ENCODE measurements at regions of chr20 and their contacts with region 1.

Region 1: DNA sequence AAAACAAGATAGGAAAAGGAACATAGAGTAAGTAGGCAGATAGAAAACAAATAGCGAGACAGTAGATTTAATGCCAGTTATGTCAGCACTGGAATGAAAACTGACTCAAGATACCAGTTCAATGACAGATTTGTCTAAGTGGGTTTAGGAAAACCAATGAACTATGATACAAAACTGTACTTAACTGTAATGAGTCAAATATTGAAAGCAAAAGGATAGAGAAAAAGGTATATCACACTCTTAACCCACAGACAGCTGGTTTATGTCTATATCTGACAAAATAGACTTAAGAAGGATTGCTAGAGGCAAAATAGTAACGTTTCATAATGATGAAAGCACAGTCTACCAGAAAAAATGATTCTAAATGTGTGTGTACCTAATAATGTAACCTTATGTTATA is 38.2 kb downstream of the ATRN start:
- DNase-seq: no peak
- H3K4me3 Mint-ChIP-seq: no peak overlapping the region
- H3K27ac Mint-ChIP-seq: no peak overlapping the region
- H3K4me1 Mint-ChIP-seq: peaks cover 11% of the 10 kb centered on the region
- H3K27me3 Mint-ChIP-seq: no peaks in the 10 kb centered on the region

Region 2: DNA sequence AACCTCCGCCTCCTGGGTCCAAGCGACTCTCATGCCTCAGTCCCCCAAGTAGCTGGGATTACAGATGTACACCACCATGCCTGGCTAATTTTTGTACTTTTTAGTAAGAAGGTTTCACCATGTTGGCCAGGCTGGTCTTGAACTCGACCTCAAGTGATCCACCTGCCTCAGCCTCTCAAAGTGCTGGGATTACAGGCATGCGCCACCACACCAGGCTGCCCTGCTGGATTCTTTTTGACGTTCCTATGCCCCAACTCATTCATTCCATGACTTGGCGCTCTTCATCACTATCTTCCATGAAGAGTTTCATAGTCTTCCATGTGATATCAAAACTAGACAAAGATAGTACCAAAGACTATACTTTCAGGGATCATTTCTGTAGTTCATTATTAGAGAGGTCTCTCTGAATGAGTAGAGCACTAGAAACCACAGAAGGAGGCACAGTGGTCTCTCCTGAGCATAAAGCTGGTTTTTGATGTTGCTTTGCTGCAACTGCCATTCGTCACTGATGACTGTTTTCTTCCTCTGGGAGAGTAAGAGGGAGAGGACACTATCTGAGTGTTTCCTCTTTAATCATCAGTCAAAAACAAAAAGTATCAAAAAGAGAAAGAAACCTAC is 125.1 kb before region 1 on chr20:
- CTCF ChIA-PET with region 1: no interaction called
- POLR2A ChIA-PET with region 1: interaction called, 3 read pairs
- intact Hi-C with region 1: loop called (anchors 1 kb)
- DNase-seq: peak; percentile 72
- H3K4me3 Mint-ChIP-seq: no peak overlapping the region
- H3K27ac Mint-ChIP-seq: peak overlapping the region; percentile 70
- H3K4me1 Mint-ChIP-seq: peaks cover 18% of the 10 kb centered on the region
- H3K27me3 Mint-ChIP-seq: no peaks in the 10 kb centered on the region

Measured in activated CD4-positive, alpha-beta memory T cell treated with anti-CD3 and anti-CD28 coated beads for 36 hours (primary cell).